H1 (cell line): ENCODE measurements at regions of chr2 and their contacts with region 1.

Region 1: DNA sequence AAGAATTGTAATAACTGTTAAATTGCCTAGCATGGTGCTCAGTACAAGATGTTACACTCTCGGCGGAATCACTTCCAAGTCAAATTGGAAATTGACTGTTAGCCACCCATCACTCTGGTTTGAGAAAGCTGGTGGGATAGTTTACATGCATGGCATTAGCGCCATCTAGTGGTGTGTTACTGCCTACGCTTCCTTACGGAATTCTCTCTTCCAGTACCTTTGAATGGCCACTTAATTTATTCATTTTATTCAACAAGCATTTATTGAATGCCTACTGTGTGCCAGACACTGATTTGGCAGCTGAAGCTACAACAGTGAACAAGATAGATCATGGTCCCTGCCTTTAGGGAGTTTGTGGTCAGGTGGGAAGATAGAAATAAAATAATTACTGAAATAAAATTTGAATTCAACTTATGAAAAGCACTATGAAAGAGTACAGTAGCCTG is 171.2 kb downstream of the TMEM247 start:
- DNase-seq: peak; percentile 17 to 69
- H3K4me3 ChIP-seq: no peak overlapping the region
- H3K27ac ChIP-seq: no peak overlapping the region
- H3K4me1 ChIP-seq: no peaks in the 10 kb centered on the region
- H3K27me3 ChIP-seq: no peaks in the 10 kb centered on the region
- CTCF ChIP-seq: peak in 2 of 3 experiments; percentile 89 to 93; a peak in 3 of 4 replicates
- EP300 ChIP-seq: no peak
- POLR2A ChIP-seq: no peak
- RAD21 ChIP-seq: peak; percentile 96

Region 2: DNA sequence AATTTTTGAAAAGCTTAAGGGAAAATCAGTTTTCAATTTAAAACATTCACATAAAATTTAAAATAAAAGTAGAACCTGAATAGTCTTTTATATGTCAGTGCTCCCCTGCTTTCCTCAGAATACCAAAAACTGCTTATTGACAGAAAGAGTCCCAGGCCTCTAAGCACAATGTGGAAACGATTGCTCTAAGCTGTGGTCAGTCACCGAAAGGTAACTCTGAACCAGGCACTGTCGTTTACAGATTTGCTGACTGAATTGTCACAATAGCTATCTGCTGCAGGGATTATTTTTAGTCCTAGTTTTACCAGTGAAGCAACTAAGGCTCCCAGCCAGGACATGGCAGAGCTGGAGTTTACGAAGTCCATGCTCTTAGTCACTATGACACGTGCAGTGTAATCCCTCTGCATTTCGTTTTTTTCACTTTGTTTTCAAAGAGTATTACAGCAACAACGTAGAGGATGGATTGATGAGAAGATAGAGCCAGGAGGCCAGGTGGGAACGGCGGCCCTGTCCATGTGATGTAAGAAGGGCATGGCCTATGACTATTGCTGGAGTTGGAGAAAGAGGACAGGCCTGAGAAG is 199.4 kb before region 1 on chr2:
- CTCF ChIA-PET with region 1: no interaction called
- POLR2A ChIA-PET with region 1: no interaction called
- DNase-seq: no peak
- H3K4me3 ChIP-seq: no peak overlapping the region
- H3K27ac ChIP-seq: no peak overlapping the region
- H3K4me1 ChIP-seq: no peaks in the 10 kb centered on the region
- H3K27me3 ChIP-seq: no peaks in the 10 kb centered on the region
- CTCF ChIP-seq: no peak
- EP300 ChIP-seq: no peak
- POLR2A ChIP-seq: no peak
- RAD21 ChIP-seq: no peak

Region 3: DNA sequence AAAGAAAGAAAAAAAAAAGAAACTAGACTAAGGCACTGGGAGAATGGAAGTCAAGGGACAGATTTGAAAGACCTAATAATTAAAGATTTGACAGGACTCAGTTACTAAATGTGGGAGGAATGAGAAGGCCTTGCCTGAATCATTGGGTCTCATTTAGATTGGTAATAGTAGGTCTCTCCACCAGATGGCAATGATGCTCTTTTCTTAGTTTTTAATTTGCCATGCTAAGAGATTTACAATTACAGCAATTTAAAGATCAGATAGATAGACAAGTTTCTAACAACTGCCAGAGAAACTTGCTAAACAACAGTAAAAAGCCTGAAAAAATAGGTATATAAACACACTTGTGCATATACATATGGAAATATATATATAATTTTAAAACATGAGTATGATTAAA is 18.2 kb before region 1 on chr2:
- CTCF ChIA-PET with region 1: interaction called, 60 read pairs
- POLR2A ChIA-PET with region 1: interaction called, 3 read pairs
- DNase-seq: no peak
- H3K4me3 ChIP-seq: no peak overlapping the region
- H3K27ac ChIP-seq: no peak overlapping the region
- H3K4me1 ChIP-seq: no peaks in the 10 kb centered on the region
- H3K27me3 ChIP-seq: no peaks in the 10 kb centered on the region
- CTCF ChIP-seq: peak in 2 of 3 experiments; percentile 35 to 44; a peak in 2 of 4 replicates
- EP300 ChIP-seq: no peak
- POLR2A ChIP-seq: no peak
- RAD21 ChIP-seq: peak; percentile 68 to 71

Region 4: GRCh38 chr2:46663614-46664013 is 13.0 kb after region 1 on chr2:
- CTCF ChIA-PET with region 1: interaction called, 22 read pairs
- POLR2A ChIA-PET with region 1: no interaction called
- DNase-seq: no peak
- H3K4me3 ChIP-seq: no peak overlapping the region
- H3K27ac ChIP-seq: no peak overlapping the region
- H3K4me1 ChIP-seq: no peaks in the 10 kb centered on the region
- H3K27me3 ChIP-seq: no peaks in the 10 kb centered on the region
- CTCF ChIP-seq: no peak
- EP300 ChIP-seq: no peak
- POLR2A ChIP-seq: no peak
- RAD21 ChIP-seq: no peak

Region 5: GRCh38 chr2:46679761-46680160 is 29.2 kb after region 1 on chr2:
- CTCF ChIA-PET with region 1: no interaction called
- POLR2A ChIA-PET with region 1: no interaction called
- DNase-seq: no peak
- H3K4me3 ChIP-seq: no peak overlapping the region
- H3K27ac ChIP-seq: no peak overlapping the region
- H3K4me1 ChIP-seq: no peaks in the 10 kb centered on the region
- H3K27me3 ChIP-seq: no peaks in the 10 kb centered on the region
- CTCF ChIP-seq: no peak
- EP300 ChIP-seq: no peak
- POLR2A ChIP-seq: no peak
- RAD21 ChIP-seq: no peak

Region 6: DNA sequence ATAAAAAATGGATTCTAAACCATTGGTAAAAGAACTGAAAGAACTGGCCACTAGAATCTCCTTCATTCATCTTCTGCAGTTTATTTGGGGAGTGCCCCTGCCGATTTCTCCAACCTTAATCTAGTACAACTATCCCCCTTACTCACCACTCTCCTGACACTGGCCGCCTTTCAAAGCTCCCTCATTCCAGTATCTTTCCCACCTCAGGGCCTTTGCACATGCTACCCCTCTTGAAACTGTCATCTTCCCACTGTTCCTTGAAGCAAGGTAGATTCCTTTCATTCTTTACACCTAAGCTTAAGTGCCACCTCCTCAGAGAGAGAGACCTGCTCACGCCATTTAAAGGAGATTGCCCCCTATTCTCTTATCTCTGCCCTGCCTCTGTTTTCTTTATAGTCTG is 117.1 kb after region 1 on chr2:
- CTCF ChIA-PET with region 1: no interaction called
- POLR2A ChIA-PET with region 1: no interaction called
- DNase-seq: no peak
- H3K4me3 ChIP-seq: no peak overlapping the region
- H3K27ac ChIP-seq: no peak overlapping the region
- H3K4me1 ChIP-seq: no peaks in the 10 kb centered on the region
- H3K27me3 ChIP-seq: no peaks in the 10 kb centered on the region
- CTCF ChIP-seq: no peak
- EP300 ChIP-seq: no peak
- POLR2A ChIP-seq: no peak
- RAD21 ChIP-seq: no peak

Region 7: DNA sequence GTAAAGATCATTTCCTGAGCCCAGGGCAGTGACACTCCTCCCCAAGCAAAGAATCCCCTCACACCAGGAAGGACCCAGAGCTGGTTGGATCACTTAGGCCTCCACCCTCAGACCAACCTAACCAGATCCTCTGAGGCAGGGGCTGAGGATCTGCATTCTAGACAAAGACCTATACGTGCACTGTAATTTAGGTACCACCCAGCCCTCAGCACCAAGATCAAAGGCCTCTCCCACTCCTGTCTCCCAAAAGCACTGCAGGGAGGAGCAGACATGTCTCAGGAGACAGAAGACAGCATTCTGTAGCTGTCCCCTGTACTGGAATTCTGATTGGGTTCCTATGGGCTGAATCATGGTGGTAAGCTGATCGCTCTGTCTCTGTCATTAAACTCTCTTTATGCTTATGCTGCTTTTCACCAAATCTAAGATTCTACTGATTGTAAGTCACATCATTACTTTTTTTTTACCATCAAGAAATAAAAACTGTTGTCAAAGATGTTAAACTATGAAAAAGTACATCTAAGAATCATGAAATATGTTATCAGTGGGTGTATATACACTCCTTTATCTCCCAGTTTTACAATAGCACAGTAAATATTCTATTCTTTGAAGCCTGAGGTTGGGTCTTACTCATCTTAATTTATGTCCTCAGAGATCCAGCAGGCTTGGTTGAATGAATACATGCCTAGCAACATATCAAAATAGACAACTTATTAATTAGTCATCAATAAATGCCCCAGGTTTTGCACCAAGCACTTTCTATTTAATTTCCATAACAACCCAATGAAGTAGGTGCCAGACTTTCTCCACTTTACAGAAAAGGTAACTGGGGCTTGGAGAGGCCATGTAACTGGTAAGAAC is 236.7 kb after region 1 on chr2:
- CTCF ChIA-PET with region 1: interaction called, 93 read pairs
- POLR2A ChIA-PET with region 1: no interaction called
- DNase-seq: no peak
- H3K4me3 ChIP-seq: no peak overlapping the region
- H3K27ac ChIP-seq: no peak overlapping the region
- H3K4me1 ChIP-seq: peaks cover 0 to 7% (median 1%) of the 10 kb centered on the region in 4 experiments; a peak in 1 of 7 replicates
- H3K27me3 ChIP-seq: no peaks in the 10 kb centered on the region
- CTCF ChIP-seq: no peak
- EP300 ChIP-seq: no peak
- POLR2A ChIP-seq: no peak
- RAD21 ChIP-seq: no peak